Endothelial cell of umbilical vein (primary cell): ENCODE measurements at regions of chr5 and their contacts with region 1.

Region 1: GRCh38 chr5:72799721-72800120 is 16.7 kb upstream of the TNPO1 start:
- DNase-seq: peak; percentile 93
- H3K4me3 ChIP-seq: no peak overlapping the region
- H3K27ac ChIP-seq: peak overlapping the region; percentile 8
- H3K4me1 ChIP-seq: peaks cover 11% of the 10 kb centered on the region
- H3K27me3 ChIP-seq: no peaks in the 10 kb centered on the region
- CTCF ChIP-seq: no peak
- POLR2A ChIP-seq: no peak

Region 2: DNA sequence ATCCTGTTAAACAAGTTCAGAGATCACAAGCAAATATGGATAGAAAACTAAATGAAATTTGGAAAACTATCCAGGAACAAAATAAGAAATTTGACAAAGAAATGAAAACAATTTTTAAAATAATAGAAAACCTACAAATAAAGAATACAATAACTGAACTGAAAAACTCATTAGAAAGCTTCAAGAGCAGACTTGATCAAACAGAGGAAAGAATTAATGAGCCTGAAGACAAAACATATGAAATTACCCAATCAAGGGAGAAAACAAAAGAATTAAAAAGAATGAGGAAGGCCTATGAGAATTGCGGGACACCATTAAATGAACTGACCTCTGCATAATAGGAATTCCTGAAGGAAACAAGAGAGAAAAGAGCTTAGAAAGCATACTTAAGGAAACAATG is 23.0 kb before region 1 on chr5:
- CTCF ChIA-PET with region 1: no interaction called
- POLR2A ChIA-PET with region 1: no interaction called
- dilution Hi-C with region 1: no loop called
- intact Hi-C with region 1: loop called (anchors 2 kb)
- DNase-seq: no peak
- H3K4me3 ChIP-seq: no peak overlapping the region
- H3K27ac ChIP-seq: no peak overlapping the region
- H3K4me1 ChIP-seq: no peaks in the 10 kb centered on the region
- H3K27me3 ChIP-seq: no peaks in the 10 kb centered on the region
- CTCF ChIP-seq: no peak
- POLR2A ChIP-seq: no peak

Region 3: DNA sequence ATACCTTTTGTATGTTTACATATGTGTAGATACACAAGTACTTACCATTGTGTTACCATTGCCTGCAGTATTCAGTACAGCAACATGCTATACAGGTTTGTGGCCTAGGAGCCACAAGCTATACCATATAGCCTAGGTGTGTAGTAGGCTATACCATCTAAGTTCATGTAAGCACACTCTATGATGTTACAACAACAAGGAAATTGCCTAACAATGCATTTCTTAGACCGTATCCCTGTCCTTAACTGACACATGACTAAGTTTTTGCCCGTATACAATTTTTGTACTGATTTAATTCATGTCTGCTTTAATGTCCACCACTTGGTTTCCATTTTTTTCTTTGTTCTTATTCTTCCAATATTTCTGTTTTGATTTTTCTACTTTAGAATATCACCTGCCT is 35.2 kb after region 1 on chr5:
- CTCF ChIA-PET with region 1: no interaction called
- POLR2A ChIA-PET with region 1: no interaction called
- dilution Hi-C with region 1: no loop called
- intact Hi-C with region 1: no loop called
- DNase-seq: no peak
- H3K4me3 ChIP-seq: no peak overlapping the region
- H3K27ac ChIP-seq: no peak overlapping the region
- H3K4me1 ChIP-seq: peaks cover 29% of the 10 kb centered on the region
- H3K27me3 ChIP-seq: no peaks in the 10 kb centered on the region
- CTCF ChIP-seq: no peak
- POLR2A ChIP-seq: no peak

Region 4: DNA sequence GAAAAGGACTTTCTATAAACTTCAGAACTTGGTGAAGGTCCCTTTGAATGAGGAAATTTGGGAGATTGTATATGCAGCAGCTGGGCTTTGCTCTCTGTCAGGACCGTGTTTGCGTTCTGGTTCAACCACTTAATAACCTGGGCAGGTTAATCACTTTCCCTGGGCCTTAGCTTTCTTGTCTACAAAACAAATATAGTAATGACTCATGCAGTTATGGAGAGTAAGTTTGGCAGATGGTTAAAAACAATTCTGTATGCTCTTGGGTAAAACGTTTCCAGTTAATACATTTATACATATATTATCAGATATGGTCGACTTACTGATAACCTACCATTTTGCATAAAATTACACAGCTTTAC is 1023.3 kb after region 1 on chr5:
- CTCF ChIA-PET with region 1: no interaction called
- POLR2A ChIA-PET with region 1: no interaction called
- dilution Hi-C with region 1: no loop called
- intact Hi-C with region 1: no loop called
- DNase-seq: peak; percentile 35
- H3K4me3 ChIP-seq: no peak overlapping the region
- H3K27ac ChIP-seq: no peak overlapping the region
- H3K4me1 ChIP-seq: peaks cover 17% of the 10 kb centered on the region
- H3K27me3 ChIP-seq: no peaks in the 10 kb centered on the region
- CTCF ChIP-seq: no peak
- POLR2A ChIP-seq: no peak